ENCODE measurements at regions of chr9 and their contacts with region 1.

Region 1: DNA sequence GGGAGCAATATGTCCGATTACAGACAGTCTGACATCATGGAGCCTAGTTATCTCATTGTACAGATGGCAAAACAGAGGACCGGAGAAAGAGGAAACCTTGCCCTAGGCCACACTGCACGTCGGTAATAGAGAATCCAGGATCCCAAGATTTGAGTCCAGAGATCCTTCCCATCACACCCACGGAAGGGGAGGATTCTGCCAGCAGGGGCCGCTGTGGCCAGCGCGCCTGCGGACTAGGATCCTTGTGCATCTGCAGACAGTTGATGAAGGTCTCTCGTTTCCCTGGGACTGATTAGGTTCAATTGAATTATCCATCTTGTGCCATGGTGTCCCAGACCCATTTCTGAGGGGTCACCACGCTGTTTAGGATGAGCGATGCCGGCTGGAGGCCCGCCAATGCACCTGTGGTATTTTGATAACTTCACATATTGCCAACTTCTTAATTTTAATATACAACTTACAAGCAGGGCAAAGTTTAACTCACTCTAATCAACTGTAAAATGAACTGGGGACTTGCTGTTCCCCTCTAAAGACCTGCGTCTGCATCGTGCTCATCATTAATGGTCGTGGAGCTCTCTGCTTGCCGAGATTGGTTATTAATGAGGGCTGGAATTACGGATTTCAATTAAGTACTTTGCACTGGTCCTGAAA is 592.7 kb upstream of the BRINP1 start:
- DNase-seq: peak; percentile 40
- ATAC-seq: peak; percentile 60; the same call in 1 of the 2 replicates
- H3K4me3 ChIP-seq: no peak overlapping the region
- H3K27ac ChIP-seq: no peak overlapping the region
- H3K4me1 ChIP-seq: no peaks in the 10 kb centered on the region
- H3K27me3 ChIP-seq: no peaks in the 10 kb centered on the region
- CTCF ChIP-seq: peak; percentile 64

Region 2: DNA sequence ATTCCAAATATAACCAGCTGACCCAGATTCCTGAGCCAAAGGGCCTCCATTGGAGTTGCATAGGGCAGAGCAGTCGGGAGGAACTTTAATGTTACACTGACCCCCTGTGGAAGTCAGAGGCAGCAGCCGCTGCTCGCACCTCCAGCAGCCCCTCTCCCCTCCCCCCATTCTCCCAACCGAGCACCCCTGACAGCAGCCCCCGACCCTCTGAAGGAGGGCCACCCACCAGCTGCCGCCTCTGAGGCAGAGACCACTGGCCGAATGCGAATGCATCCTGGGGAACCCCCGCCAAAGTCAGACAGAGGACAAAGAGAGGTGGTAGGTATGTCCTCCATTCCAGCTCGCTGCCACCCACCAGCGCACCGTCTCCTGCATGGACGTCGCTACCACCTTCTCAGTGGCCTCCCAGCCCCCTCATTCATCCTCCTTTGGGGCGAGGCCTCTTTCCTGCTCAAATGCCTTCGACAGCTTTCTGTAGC is 387.1 kb after region 1 on chr9:
- CTCF ChIA-PET with region 1: no interaction called
- POLR2A ChIA-PET with region 1: no interaction called
- intact Hi-C with region 1: loop called (anchors 5 kb)
- DNase-seq: peak; percentile 54
- ATAC-seq: peak; percentile 83
- H3K4me3 ChIP-seq: no peak overlapping the region
- H3K27ac ChIP-seq: no peak overlapping the region
- H3K4me1 ChIP-seq: peaks cover 4% of the 10 kb centered on the region; the same call in 1 of the 2 replicates
- H3K27me3 ChIP-seq: no peaks in the 10 kb centered on the region
- CTCF ChIP-seq: peak; percentile 72

Measured in PC-3 (cell line).